GM18951 (cell line): ENCODE measurements at regions of chr4 and their contacts with region 1.

Region 1: GRCh38 chr4:3346146-3346545 is 53.3 kb downstream of the RGS12 start:
- POLR2A ChIP-seq: no peak

Region 2: GRCh38 chr4:3449574-3450534 is 103.7 kb after region 1 on chr4:
- in situ Hi-C with region 1: loop called (anchors 5 kb)
- POLR2A ChIP-seq: no peak

Region 3: DNA sequence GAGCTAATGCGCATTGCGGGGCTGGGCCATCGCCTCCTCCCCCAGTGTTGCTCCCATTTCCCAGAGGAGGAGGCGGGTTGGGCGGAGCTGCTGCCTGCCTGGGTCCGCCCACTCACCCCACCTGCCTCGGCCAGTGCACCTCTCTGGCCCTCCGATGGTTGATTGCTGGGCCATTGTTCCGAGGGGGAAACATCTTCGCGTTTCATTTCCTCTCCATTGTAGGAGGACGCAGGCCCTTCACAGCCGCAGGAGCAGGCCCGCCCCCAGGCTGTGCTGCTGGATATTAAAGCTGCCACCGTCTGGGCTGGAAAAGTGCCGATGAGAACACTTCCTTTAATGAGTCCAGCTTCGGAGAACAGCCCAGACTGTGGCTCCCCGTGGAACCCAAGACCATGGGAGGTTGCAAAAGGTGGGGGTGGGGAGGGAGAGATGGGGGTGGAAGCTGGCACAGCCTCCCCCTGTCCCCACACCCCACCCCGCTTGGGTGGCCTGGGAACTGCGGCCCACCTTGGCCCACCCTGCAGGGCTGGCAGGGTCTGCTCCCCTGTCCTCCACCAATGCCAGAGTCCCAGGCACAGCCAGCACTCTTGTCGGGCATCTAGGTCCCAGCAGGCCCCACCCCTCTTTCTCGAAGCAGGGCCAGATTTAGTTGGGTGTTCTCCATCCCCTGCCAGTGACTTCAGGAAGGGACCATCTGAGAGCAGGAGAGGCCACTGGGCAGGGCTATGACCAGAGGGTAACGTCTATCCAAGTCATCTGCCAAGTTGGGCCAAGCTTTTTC is 516.7 kb after region 1 on chr4:
- in situ Hi-C with region 1: no loop called
- POLR2A ChIP-seq: no peak

Region 4: GRCh38 chr4:4524364-4524763 is 1178.2 kb after region 1 on chr4:
- in situ Hi-C with region 1: no loop called
- POLR2A ChIP-seq: no peak